HCT116 (cell line): ENCODE measurements at regions of chr2 and their contacts with region 1.

Region 1: DNA sequence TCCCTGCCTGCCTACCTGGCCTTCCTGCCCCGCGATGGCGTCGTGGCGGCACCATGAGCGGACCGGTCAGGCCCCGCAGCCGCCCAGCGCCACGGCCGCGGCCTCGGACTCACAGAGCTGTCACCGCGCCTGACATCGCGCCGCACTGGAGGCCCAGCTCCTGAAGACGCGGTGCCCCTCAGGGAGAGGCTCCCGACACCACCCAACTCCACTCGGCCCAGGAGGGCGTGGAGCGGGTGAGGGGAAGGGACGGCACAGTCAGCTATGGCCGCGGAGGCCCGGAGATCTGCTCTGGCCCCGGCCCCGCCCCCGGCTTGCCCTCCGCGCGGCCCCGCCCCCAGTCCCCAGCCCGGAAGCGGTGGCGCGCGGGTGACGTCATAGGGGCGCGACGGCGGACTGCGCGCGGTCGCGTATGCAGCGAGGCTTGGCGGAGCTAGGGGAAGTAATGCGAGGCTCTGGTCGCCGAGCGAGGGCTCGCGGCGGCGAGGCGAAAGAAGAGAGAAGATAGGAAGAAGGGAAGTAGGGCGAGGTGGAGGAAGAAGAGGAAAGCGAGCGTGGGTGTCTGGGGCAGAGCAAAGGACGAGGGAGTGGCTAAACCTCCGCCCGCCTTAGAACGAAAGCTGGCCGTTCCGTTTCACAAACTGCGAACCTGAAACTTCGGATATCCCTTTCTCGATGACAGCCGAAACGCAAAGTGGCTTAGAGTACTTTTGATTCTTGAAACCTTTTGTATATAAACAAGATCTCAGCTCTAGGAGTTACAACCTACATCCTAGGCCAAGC is at the start of gene SLC35F5:
- DNase-seq: peak; percentile 70
- ATAC-seq: peak; percentile 96
- H3K4me3 ChIP-seq: peak within 1 kb of the TSS; percentile 82 to 92
- H3K27ac ChIP-seq: peak within 1 kb of the TSS; percentile 91
- H3K4me1 ChIP-seq: peaks cover 0 to 17% of the 10 kb centered on the region in 2 experiments; a peak in 3 of 4 replicates
- H3K27me3 ChIP-seq: no peaks in the 10 kb centered on the region
- CTCF ChIP-seq: no peak
- POLR2A ChIP-seq: peak; percentile 48
- RAD21 ChIP-seq: no peak; the same call in 1 of the 2 replicates
- total RNA-seq, gene SLC35F5: 14.3 TPM

Region 2: GRCh38 chr2:113889471-113890252 is 133.1 kb after region 1 on chr2 and contains the start of gene ACTR3:
- CTCF ChIA-PET with region 1: no interaction called
- POLR2A ChIA-PET with region 1: interaction called, 5 read pairs
- RAD21 ChIA-PET with region 1: no interaction called
- intact Hi-C with region 1: loop called (anchors 1 kb)
- DNase-seq: peak; percentile 95
- ATAC-seq: peak; percentile 90
- H3K4me3 ChIP-seq: peak within 1 kb of the TSS; percentile 73 to 86
- H3K27ac ChIP-seq: peak within 1 kb of the TSS; percentile 82
- H3K4me1 ChIP-seq: peaks cover 39 to 53% of the 10 kb centered on the region in 2 experiments
- H3K27me3 ChIP-seq: no peaks in the 10 kb centered on the region
- CTCF ChIP-seq: no peak
- POLR2A ChIP-seq: peak; percentile 97
- RAD21 ChIP-seq: 0 out of 2 replicates have a peak, but pooled peaks have one; percentile 21
- total RNA-seq, gene ACTR3: 232 TPM

Region 3: GRCh38 chr2:113965644-113966043 is 209.1 kb after region 1 on chr2:
- CTCF ChIA-PET with region 1: no interaction called
- POLR2A ChIA-PET with region 1: interaction called, 3 read pairs
- RAD21 ChIA-PET with region 1: no interaction called
- intact Hi-C with region 1: loop called (anchors 10 kb)
- DNase-seq: peak; percentile 38
- ATAC-seq: peak; percentile 94
- H3K4me3 ChIP-seq: no peak overlapping the region
- H3K27ac ChIP-seq: no peak overlapping the region
- H3K4me1 ChIP-seq: no peaks in the 10 kb centered on the region
- H3K27me3 ChIP-seq: no peaks in the 10 kb centered on the region
- CTCF ChIP-seq: peak; percentile 19 to 74 (median 67); a peak in 5 of 6 replicates
- POLR2A ChIP-seq: no peak
- RAD21 ChIP-seq: peak; percentile 50

Region 4: DNA sequence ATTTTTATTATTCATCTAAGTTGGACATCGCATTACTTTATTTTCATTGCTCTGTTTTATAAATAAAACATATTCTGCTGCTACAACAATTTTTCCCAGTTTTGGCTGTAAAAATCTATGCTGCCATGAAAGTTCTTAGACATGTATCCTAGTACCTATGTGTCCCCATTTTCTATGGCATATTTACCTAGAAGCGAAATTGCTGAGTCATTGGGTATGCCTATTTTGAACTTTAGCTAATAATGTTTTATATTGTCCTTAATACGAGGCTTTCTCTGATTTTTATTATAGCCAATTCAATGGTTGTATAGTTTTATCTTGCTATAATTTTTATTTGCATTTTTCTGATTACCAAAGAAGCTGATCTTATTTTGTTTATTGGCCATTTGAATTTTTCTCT is 575.4 kb after region 1 on chr2:
- CTCF ChIA-PET with region 1: no interaction called
- POLR2A ChIA-PET with region 1: no interaction called
- RAD21 ChIA-PET with region 1: no interaction called
- intact Hi-C with region 1: no loop called
- DNase-seq: no peak
- ATAC-seq: no peak
- H3K4me3 ChIP-seq: no peak overlapping the region
- H3K27ac ChIP-seq: no peak overlapping the region
- H3K4me1 ChIP-seq: no peaks in the 10 kb centered on the region
- H3K27me3 ChIP-seq: no peaks in the 10 kb centered on the region
- CTCF ChIP-seq: no peak
- POLR2A ChIP-seq: no peak
- RAD21 ChIP-seq: no peak